Calu3 (cell line): ENCODE measurements at regions of chr1 and their contacts with region 1.

Region 1: GRCh38 chr1:94773931-94774422 is 46.2 kb upstream of the SLC44A3 start:
- DNase-seq: peak; percentile 49
- H3K4me3 Mint-ChIP-seq: peak overlapping the region; percentile 33
- H3K27ac Mint-ChIP-seq: peak overlapping the region; percentile 97
- H3K4me1 Mint-ChIP-seq: peaks cover 66% of the 10 kb centered on the region
- H3K27me3 Mint-ChIP-seq: no peaks in the 10 kb centered on the region
- CTCF ChIP-seq: no peak

Region 2: DNA sequence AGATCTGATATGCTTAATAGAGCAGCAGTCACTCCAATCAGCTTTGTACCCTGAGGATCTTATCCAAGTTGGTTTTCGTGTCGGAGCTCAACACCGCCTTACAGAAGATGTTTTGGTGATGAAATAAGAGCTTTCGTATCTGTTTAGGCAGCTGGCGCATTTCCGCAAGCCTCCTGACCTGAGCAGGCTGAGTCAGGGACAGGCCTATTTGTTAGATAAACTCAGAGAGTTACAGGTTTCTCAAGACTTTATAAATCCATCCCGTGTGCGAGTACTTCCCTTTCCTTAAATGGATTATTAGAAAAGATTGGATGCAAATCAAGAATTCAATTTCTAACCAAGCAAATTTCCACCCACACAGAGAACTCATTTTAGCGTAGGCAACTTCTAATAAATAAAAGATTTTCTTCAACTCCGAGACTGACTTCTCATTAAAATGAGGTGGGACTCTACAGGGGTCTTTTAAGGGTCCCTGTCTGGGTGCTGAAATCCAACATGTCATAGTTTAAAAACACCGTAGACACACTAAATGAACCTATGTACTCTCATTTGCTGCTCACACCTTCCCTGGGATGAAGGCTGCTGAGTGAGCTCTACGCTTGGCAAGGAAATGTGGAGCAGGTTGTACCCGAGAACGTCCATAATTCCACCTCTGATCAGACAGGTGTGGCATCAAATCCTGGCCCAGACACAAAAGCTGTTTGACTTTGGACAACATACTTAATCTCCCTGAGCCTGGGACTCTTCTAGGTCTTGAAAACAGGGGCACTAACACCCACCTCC is 125.6 kb before region 1 on chr1:
- CTCF ChIA-PET with region 1: no interaction called
- intact Hi-C with region 1: loop called (anchors 2 kb)
- DNase-seq: peak; percentile 75
- H3K4me3 Mint-ChIP-seq: peak overlapping the region; percentile 7
- H3K27ac Mint-ChIP-seq: no peak overlapping the region
- H3K4me1 Mint-ChIP-seq: peaks cover 28% of the 10 kb centered on the region
- H3K27me3 Mint-ChIP-seq: no peaks in the 10 kb centered on the region
- CTCF ChIP-seq: no peak

Region 3: DNA sequence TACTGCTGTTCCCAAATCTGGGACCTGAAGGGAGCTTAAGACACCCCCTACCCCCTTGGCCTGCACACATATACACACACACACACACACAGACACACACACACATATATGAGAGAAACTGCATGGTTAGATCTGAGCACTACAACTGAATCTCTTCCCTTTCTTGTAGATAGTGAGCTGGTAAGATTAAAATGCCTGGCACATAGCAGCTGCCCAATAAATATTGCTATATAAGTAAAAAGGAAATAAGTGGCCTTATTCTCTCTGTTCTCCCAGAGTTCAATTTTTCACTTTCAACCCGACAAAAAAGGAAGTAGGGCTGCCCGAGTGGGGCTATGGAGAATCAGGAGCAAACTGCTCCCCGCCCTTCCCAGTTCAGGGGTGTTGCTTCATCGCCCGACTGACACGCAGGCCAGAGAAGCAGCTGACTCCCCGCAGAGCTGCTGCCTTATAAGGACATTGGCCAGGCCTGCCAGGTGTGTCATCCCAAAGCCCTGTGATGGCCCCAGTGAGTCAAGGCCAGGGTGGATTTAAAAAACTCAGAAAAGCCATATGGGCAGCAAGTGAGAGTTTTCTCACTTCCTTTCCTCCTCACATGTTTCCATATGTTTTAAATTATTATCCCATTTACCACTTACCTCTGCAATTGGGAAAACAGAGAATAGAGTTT is 60.4 kb before region 1 on chr1:
- CTCF ChIA-PET with region 1: no interaction called
- intact Hi-C with region 1: no loop called
- DNase-seq: peak; percentile 86
- H3K4me3 Mint-ChIP-seq: no peak overlapping the region
- H3K27ac Mint-ChIP-seq: peak overlapping the region; percentile 68
- H3K4me1 Mint-ChIP-seq: peaks cover 24% of the 10 kb centered on the region
- H3K27me3 Mint-ChIP-seq: no peaks in the 10 kb centered on the region
- CTCF ChIP-seq: no peak

Region 4: DNA sequence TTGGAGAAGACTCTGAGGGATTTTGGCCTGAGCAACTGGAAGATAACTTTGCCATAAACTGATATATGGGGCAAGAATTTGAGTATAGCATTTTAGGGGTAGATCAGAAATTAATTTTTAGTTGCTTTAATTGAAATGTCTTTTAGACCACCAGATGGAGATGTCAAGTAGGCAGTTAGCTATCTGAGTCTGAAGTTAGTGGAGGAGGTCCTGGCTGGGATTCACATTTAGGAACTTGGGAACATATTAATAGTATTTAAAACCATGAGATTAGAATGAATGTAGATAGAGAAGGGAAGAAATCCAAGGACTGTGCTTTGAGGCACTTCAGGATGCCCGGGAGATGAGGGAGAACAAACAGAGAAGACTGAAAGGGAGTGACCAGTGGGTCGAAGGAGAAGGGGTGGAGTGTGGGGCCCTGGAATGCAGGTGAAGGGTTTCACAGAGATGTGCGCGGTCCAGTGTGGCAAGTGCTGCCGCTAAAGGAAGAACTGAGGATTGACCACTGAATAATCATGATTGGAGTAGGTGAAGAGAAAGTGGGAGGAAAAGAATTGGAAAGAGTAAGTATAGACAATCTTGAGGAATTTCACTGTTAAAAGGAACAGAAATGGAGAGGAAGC is 78.9 kb after region 1 on chr1:
- CTCF ChIA-PET with region 1: no interaction called
- intact Hi-C with region 1: no loop called
- DNase-seq: no peak
- H3K4me3 Mint-ChIP-seq: no peak overlapping the region
- H3K27ac Mint-ChIP-seq: no peak overlapping the region
- H3K4me1 Mint-ChIP-seq: no peaks in the 10 kb centered on the region
- H3K27me3 Mint-ChIP-seq: no peaks in the 10 kb centered on the region
- CTCF ChIP-seq: no peak